ENCODE measurements at regions of chr11 and their contacts with region 1.

Region 1: DNA sequence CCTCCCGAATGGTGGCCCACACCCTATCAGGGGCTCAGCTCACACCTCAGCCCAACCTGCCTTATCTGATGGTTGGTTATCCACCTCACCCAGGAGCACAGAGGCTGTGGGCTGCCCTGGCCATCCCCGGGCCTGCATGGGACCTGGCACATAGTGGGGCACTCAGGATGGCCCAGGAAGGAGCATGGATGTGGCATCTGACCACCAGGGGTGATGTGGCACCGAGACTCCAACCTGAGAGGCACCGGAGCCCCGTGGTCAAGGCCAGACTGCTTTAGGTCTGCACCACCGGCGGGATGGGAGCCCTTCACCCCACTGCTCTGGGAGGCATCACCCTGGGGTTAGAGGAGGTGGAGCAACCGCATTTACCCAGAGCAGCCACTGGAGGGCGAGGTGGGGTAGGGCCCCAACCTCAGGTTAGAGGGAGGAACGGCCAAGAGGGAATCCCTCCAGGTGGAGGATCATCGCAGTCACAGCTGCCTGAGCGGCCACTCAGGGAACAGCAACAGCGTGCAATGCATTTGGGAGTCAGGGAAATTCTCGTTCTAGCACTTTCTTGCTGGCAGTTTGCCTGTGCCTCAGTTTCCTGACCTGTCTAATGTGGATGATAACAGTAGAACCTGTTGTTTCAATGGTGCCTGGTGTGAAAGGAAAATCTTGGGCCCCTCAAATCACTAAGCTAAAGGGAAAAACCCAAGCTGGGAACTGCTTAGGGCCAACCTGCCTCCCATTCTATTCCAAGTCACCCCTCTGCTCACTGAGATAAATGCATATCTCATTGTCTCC is 52.9 kb upstream of the CARS1 start:
- DNase-seq: peak; percentile 63
- H3K4me3 Mint-ChIP-seq: no peak overlapping the region
- H3K27ac Mint-ChIP-seq: peak overlapping the region; percentile 71
- H3K4me1 Mint-ChIP-seq: peaks cover 28% of the 10 kb centered on the region
- H3K27me3 Mint-ChIP-seq: no peaks in the 10 kb centered on the region
- CTCF ChIP-seq: peak; percentile 44

Region 2: GRCh38 chr11:3091791-3092602 is 18.1 kb before region 1 on chr11:
- CTCF ChIA-PET with region 1: interaction called, 13 read pairs
- POLR2A ChIA-PET with region 1: no interaction called
- intact Hi-C with region 1: no loop called
- DNase-seq: peak; percentile 83
- H3K4me3 Mint-ChIP-seq: no peak overlapping the region
- H3K27ac Mint-ChIP-seq: no peak overlapping the region
- H3K4me1 Mint-ChIP-seq: peaks cover 27% of the 10 kb centered on the region
- H3K27me3 Mint-ChIP-seq: no peaks in the 10 kb centered on the region
- CTCF ChIP-seq: peak; percentile 100

Region 3: GRCh38 chr11:3123761-3124733 is 13.9 kb after region 1 on chr11:
- CTCF ChIA-PET with region 1: interaction called, 23 read pairs
- POLR2A ChIA-PET with region 1: interaction called, 179 read pairs
- intact Hi-C with region 1: no loop called
- DNase-seq: peak; percentile 99
- H3K4me3 Mint-ChIP-seq: peak overlapping the region; percentile 90
- H3K27ac Mint-ChIP-seq: peak overlapping the region; percentile 79
- H3K4me1 Mint-ChIP-seq: peaks cover 32% of the 10 kb centered on the region
- H3K27me3 Mint-ChIP-seq: no peaks in the 10 kb centered on the region
- CTCF ChIP-seq: no peak

Region 4: DNA sequence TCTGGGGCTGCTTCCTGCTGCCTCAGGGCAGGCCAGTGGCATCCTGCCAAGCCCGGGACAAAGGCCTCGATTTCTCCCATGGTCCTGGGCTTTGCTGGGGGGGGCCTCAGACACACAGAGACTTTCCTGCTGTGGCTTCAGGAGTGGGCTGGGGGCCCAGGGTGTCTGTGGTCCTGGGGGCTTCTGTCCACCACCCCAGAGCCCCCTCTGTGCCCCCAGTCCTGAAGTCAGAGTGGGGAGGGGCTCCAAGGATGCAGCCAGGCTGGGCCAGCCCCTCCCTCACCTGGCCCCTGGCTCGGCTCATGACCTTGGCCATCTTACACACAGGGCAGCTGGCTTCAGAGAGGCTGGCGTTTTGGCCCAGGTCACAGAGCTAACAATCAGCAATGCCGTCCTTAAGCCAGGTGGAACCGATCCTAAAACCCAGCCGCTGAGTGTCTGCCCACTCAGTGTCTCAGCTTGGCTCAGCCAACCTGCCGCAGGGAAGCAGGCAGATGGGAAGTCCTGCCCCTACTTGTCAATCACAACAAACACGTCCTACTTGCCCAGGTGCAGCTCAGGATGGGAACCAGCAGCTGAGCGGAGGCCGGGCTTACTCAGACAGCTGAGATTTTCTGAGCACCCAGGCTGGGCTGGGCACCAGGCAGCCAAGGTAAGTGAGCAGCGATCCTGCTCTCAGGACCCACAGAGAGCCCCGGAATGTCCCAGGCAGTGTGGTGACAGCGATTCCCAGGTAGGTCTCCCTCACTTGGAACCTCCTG is 20.4 kb after region 1 on chr11:
- CTCF ChIA-PET with region 1: interaction called, 23 read pairs
- POLR2A ChIA-PET with region 1: interaction called, 179 read pairs
- intact Hi-C with region 1: no loop called
- DNase-seq: peak; percentile 91
- H3K4me3 Mint-ChIP-seq: no peak overlapping the region
- H3K27ac Mint-ChIP-seq: peak overlapping the region; percentile 49
- H3K4me1 Mint-ChIP-seq: peaks cover 15% of the 10 kb centered on the region
- H3K27me3 Mint-ChIP-seq: no peaks in the 10 kb centered on the region
- CTCF ChIP-seq: no peak

Region 5: DNA sequence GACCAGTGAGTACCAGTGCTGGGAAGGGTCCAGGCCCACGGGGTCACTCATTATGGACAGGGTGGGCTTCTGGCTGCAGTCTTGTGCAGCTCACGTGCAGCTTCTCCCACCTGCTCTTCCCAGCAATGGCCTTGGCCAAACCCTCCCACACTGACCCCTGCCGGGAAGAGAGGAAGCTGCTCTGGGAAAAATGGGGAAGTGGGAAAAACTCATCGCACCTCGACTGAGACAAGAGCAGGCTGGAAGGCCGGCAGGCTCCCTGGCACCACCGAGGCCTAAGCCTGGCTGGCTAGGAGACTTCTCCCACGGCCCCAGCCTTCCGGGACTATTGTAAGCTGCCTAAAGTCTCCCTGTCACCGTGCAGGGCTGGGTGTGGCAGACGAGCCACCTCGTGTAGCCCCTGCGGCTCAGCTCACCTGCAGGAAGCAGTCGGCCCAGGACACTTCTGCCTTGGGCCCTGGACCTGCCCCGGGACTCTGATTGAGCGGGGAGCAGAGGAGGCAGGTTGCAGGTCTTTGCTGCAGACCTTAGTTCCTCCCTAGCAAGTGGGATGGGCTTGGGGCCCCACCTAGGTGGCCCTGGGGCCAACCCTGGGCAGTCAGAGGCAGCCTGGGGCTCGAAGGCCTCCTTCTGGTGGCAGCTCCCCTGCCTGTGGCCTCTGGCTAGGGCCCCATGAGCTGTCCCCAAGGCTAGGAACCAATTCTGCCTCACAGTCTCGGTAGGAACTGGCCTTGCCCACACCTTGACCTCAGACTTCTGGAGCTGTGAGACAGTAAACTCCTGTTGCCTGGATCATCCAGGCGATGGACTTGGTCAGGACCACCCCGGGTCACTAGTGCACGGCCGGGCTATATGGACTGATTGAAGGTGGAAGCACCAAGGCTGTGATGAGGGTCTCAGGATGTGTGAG is 85.4 kb after region 1 on chr11:
- CTCF ChIA-PET with region 1: interaction called, 7 read pairs
- POLR2A ChIA-PET with region 1: interaction called, 4 read pairs
- intact Hi-C with region 1: loop called (anchors 1 kb)
- DNase-seq: peak; percentile 52
- H3K4me3 Mint-ChIP-seq: no peak overlapping the region
- H3K27ac Mint-ChIP-seq: no peak overlapping the region
- H3K4me1 Mint-ChIP-seq: no peaks in the 10 kb centered on the region
- H3K27me3 Mint-ChIP-seq: peaks cover 11% of the 10 kb centered on the region
- CTCF ChIP-seq: peak; percentile 42

Region 6: GRCh38 chr11:3217676-3218482 is 107.8 kb after region 1 on chr11:
- CTCF ChIA-PET with region 1: interaction called, 4 read pairs
- POLR2A ChIA-PET with region 1: no interaction called
- intact Hi-C with region 1: loop called (anchors 1 kb)
- DNase-seq: no peak
- H3K4me3 Mint-ChIP-seq: no peak overlapping the region
- H3K27ac Mint-ChIP-seq: no peak overlapping the region
- H3K4me1 Mint-ChIP-seq: peaks cover 18% of the 10 kb centered on the region
- H3K27me3 Mint-ChIP-seq: peaks cover 91% of the 10 kb centered on the region
- CTCF ChIP-seq: no peak

Measured in MCF 10A (cell line).